PC-3 (cell line): ENCODE measurements at regions of chr9 and their contacts with region 1.

Region 1: GRCh38 chr9:97598461-97599288 is 34.5 kb downstream of the TSTD2 start:
- DNase-seq: peak; percentile 72
- ATAC-seq: peak; percentile 88
- H3K4me3 ChIP-seq: no peak overlapping the region
- H3K27ac ChIP-seq: no peak overlapping the region
- H3K4me1 ChIP-seq: no peaks in the 10 kb centered on the region
- H3K27me3 ChIP-seq: no peaks in the 10 kb centered on the region
- CTCF ChIP-seq: peak; percentile 76

Region 2: DNA sequence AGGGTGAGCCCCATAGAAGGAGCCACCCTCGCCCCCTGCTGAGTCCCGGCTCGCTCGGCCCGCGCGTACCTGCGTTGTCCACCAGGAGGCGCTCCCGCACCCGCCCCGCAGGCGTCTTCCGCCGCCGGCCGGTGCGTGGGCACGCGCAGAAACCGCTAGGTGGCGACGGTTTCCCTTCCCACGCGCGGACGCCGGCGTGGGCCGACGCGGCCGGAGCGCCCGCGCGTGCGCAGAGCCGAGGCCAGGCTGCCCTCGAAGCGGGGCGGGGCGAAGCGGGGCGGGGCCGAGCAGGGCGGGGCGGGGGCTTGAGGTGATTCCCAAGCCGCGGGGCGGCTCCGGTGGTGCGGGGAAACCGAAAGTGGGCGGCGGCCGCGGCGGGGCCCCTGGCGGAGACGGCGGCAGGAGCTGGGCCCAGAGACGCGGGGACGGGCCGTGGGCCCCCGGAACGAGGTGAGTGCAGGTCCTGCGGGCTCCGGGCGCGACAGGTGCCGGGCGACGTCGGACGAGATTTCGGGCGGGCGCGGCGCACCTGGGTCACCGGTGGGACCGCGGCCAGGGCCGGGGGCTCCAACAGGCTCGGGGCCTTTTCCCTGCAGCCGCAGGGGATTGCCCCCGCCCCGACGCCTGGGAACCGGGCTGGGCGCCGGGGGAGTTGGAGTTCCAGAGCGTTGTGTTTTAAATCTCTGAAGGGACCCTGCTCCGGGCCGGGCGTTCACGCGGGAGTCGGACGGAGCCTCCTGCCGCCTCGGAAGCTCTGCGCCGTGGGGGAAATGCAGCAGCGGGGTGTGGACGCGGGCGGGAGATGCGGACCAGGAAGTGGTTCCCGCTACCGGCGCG is 186.7 kb before region 1 on chr9 and contains the start of gene TDRD7:
- CTCF ChIA-PET with region 1: no interaction called
- POLR2A ChIA-PET with region 1: no interaction called
- intact Hi-C with region 1: loop called (anchors 5 kb)
- DNase-seq: peak; percentile 82
- ATAC-seq: peak; percentile 80
- H3K4me3 ChIP-seq: peak within 1 kb of the TSS; percentile 76
- H3K27ac ChIP-seq: no peak within 1 kb of the TSS
- H3K4me1 ChIP-seq: no peaks in the 10 kb centered on the region; the same call in 1 of the 2 replicates
- H3K27me3 ChIP-seq: no peaks in the 10 kb centered on the region
- CTCF ChIP-seq: peak; percentile 77
- total RNA-seq, gene TDRD7: 4.2 and 4.3 TPM in 2 replicates

Region 3: DNA sequence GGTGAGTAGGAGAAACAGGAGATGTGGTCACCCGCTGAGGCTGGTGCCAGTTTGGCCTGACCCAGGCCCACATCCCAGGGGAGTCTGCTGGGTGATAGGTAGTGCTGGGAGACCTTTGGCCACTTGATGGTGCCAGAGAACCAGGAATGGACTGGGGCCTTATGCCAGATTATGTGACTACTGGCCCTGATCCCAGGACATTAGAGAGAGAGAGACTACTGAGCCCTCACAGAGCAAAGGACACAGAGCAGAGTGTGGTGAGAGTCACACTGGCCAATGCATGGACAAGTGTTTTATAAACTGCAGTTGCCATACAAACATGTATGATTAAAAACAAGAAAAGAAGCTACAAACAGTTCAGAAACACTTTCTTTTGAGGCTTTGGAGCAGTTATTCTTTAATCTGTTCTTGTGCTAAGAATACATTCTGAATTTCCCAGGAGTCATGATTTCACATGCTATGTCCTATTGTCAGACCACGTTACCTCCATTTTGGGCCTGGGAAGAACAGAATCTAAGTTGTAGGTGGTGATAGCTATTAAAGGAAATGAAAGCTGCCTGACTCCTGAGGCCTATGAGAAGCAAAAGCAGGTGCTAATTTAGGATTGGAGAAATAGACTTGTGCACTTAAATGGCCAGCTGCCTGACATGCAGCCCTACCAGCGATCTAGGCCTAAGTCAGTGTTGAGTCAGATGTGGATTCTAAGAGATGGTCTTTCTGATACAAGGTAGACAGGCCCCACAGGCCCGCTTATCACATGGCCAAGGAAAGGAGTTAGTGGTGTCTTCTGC is 129.8 kb before region 1 on chr9:
- CTCF ChIA-PET with region 1: interaction called, 18 read pairs
- POLR2A ChIA-PET with region 1: no interaction called
- intact Hi-C with region 1: loop called (anchors 1 kb)
- DNase-seq: peak; percentile 60
- ATAC-seq: peak; percentile 78
- H3K4me3 ChIP-seq: no peak overlapping the region
- H3K27ac ChIP-seq: no peak overlapping the region
- H3K4me1 ChIP-seq: no peaks in the 10 kb centered on the region
- H3K27me3 ChIP-seq: no peaks in the 10 kb centered on the region
- CTCF ChIP-seq: peak; percentile 83

Region 4: GRCh38 chr9:97632985-97633858 is 34.5 kb after region 1 on chr9 and contains the starts of genes NCBP1 and TSTD2:
- CTCF ChIA-PET with region 1: no interaction called
- POLR2A ChIA-PET with region 1: no interaction called
- intact Hi-C with region 1: no loop called
- DNase-seq: peak; percentile 94
- ATAC-seq: peak; percentile 91
- H3K4me3 ChIP-seq: peak within 1 kb of the TSS; percentile 96
- H3K27ac ChIP-seq: peak within 1 kb of the TSS; percentile 89
- H3K4me1 ChIP-seq: peaks cover 16% of the 10 kb centered on the region
- H3K27me3 ChIP-seq: no peaks in the 10 kb centered on the region
- CTCF ChIP-seq: no peak
- total RNA-seq, gene NCBP1: 22.6 and 23.0 TPM in 2 replicates
- total RNA-seq, gene TSTD2: 7.4 and 11.2 TPM in 2 replicates

Region 5: DNA sequence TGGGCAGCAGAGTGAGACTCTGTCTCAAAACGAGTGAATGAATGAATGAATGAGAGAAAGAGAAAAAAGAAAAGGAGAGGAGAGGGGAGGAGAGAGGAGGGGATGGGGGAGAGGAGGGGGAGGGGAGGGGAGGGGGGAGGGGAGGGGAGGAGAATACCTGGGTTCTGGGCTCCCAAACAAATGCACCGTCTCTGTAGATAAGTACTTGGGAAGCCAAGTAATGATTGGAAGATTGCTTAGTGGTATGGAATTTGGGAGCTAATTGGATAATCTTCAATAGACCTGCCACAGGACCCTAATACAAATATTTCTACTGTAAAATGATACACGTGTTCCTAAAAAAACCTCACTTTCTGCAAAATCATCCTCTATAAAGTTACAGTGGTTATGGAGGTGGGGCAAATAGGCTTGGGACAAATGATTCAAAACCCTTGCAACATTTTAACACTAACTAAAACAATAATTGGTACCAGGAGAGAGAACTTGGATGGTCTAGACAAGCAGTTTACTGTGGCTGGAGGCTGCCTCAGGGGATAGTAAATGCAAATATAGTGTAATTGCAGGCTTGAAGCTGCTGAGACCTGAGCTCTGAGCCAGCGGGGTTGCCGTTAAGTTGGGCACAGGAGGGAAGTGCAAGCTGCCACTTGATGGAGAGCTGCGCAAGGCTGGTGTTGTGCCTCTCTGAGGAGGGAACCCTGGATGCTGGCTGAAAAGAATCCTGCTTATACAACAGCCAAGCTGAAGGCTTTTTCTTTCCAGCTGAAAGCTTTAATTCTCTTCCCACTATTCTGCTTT is 335.8 kb after region 1 on chr9:
- CTCF ChIA-PET with region 1: no interaction called
- POLR2A ChIA-PET with region 1: no interaction called
- intact Hi-C with region 1: no loop called
- DNase-seq: no peak
- ATAC-seq: no peak
- H3K4me3 ChIP-seq: no peak overlapping the region
- H3K27ac ChIP-seq: no peak overlapping the region
- H3K4me1 ChIP-seq: no peaks in the 10 kb centered on the region
- H3K27me3 ChIP-seq: peaks cover 43% of the 10 kb centered on the region
- CTCF ChIP-seq: no peak